ENCODE measurements at regions of chr19 and their contacts with region 1.

Region 1: DNA sequence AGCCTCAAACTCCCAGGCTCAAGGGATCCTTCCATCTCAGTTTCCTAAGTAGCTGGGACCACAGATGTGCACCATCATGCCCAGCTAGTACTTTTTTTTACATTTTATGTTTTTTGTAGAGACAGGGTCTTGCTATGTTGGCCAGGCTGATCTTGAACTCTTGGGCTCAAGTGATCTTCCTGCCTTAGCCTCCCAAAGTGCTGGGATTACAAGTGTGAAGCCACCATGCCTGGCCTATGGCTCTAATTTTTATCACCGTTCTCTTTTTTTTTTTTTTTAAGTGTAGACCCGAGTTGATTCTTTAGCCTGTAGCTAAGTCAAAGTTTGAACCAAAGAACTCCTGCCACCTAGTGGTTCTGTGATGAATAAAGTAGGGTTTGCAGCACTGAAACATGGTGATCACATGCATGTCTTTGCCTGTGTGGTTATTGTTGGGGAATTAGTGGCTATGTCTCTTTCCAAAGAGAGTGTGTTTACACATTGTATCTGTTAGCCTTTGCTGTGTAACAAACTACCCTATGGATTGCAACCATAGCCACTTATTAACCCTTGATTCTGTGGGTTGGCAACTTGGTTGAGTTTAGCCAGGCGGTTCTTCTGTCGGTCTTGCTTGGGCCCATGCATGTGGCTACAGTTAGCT is 11.6 kb downstream of the NFILZ start:
- DNase-seq: no peak
- H3K4me3 Mint-ChIP-seq: no peak overlapping the region
- H3K27ac Mint-ChIP-seq: no peak overlapping the region
- H3K4me1 Mint-ChIP-seq: peaks cover 3% of the 10 kb centered on the region
- H3K27me3 Mint-ChIP-seq: peaks cover 24% of the 10 kb centered on the region

Region 2: GRCh38 chr19:8592231-8593009 is 49.6 kb before region 1 on chr19:
- CTCF ChIA-PET with region 1: no interaction called
- POLR2A ChIA-PET with region 1: no interaction called
- intact Hi-C with region 1: no loop called
- DNase-seq: peak; percentile 99
- H3K4me3 Mint-ChIP-seq: peak overlapping the region; percentile 70
- H3K27ac Mint-ChIP-seq: peak overlapping the region; percentile 59
- H3K4me1 Mint-ChIP-seq: peaks cover 7% of the 10 kb centered on the region
- H3K27me3 Mint-ChIP-seq: no peaks in the 10 kb centered on the region

Region 3: DNA sequence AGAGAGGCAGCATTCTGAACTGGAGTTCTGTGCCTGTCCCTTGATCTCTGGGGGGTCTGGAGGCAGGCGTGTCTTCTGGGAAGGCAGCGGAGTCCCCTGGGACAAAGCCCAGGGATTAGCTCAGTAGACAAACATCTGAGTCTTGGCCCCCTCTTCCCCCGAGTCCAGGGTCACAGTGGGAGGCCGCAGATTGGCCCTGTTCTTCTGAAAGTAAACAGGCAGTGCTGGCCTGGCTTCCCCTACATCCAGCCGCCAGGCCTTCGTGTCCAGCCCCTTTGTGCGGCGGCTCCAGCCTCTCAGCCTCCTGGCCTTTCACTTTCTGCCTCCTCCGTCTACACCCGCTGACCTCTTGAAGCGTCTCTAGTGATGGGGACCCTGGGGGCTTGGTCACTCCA is 10.6 kb before region 1 on chr19:
- CTCF ChIA-PET with region 1: interaction called, 10 read pairs
- POLR2A ChIA-PET with region 1: no interaction called
- intact Hi-C with region 1: no loop called
- DNase-seq: no peak
- H3K4me3 Mint-ChIP-seq: no peak overlapping the region
- H3K27ac Mint-ChIP-seq: no peak overlapping the region
- H3K4me1 Mint-ChIP-seq: no peaks in the 10 kb centered on the region
- H3K27me3 Mint-ChIP-seq: no peaks in the 10 kb centered on the region

Measured in activated CD4-positive, alpha-beta memory T cell treated with anti-CD3 and anti-CD28 coated beads for 36 hours (primary cell).